Activated CD4-positive, alpha-beta memory T cell treated with anti-CD3 and anti-CD28 coated beads, Interleukin-2, amount 10 ng/mL, durations not matched to agents 7 days and 5 days (primary cell): ENCODE measurements at regions of chr11 and their contacts with region 1.

Region 1: DNA sequence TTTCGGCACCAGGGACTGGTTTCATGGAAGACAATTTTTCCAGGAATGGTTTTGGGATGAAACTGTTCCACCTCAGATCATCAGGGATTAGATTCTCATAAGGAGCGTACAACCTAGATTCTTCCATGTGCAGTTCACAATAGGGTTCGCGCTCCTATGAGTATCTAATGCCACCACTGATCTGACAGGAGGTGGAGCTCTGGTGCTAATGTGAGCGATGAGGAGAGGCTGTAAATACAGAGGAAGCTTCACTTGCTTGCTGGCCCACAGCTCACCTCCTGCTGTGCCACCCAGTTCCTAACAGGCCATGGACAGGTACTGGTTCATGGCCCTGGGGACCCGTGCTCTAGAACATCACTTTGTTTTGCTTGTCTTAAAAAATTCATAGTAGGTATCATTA is 41.8 kb upstream of the AMPD3 start:
- DNase-seq: peak; percentile 64
- H3K4me3 Mint-ChIP-seq: no peak overlapping the region
- H3K27ac Mint-ChIP-seq: no peak overlapping the region
- H3K4me1 Mint-ChIP-seq: peaks cover 49% of the 10 kb centered on the region
- H3K27me3 Mint-ChIP-seq: peaks cover 10% of the 10 kb centered on the region

Region 2: GRCh38 chr11:10394229-10395101 is 18.8 kb before region 1 on chr11:
- CTCF ChIA-PET with region 1: no interaction called
- POLR2A ChIA-PET with region 1: no interaction called
- DNase-seq: no peak
- H3K4me3 Mint-ChIP-seq: no peak overlapping the region
- H3K27ac Mint-ChIP-seq: no peak overlapping the region
- H3K4me1 Mint-ChIP-seq: no peaks in the 10 kb centered on the region
- H3K27me3 Mint-ChIP-seq: peaks cover 35% of the 10 kb centered on the region

Region 3: DNA sequence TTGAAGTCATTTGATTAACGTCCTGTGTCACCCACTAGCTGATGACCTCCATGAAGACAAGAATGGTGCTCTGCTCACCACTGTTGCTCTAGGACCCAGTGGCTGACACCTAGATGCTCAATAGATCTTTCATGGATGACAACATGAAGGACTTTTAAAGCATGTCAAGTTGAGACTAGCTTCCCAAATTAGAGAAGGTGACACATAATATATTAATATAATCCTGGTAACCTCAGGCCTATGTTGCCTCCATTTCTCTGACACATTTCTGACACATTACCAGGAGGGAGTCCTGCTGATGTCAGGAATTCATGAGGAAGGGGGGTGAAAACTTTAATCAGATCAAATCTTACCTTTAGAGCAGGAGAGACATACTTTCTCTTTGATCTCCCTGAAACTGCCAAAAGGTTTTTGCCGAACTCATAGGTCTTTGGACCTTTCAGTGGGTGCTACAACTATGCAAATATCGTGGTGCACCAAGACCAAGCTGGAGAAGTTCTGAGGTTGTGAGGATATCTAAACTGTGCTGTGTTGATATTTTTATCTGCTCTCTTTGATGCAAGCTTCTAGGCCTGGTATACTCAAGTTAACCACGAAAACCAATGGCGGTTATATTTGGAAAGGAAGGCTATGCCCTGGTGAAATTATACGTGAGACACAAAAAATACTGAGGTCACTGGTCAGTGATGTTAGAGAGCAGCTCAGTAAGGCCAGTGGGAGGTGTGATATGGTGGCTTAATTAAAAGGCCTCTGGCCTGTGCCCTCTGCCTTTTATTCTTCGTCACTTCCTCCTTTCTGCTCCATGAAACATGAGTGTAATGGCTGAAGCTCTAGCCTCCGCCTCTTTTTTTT is 28.6 kb after region 1 on chr11:
- CTCF ChIA-PET with region 1: interaction called, 14 read pairs
- POLR2A ChIA-PET with region 1: no interaction called
- DNase-seq: peak; percentile 40
- H3K4me3 Mint-ChIP-seq: no peak overlapping the region
- H3K27ac Mint-ChIP-seq: peak overlapping the region; percentile 5
- H3K4me1 Mint-ChIP-seq: peaks cover 29% of the 10 kb centered on the region
- H3K27me3 Mint-ChIP-seq: peaks cover 9% of the 10 kb centered on the region

Region 4: DNA sequence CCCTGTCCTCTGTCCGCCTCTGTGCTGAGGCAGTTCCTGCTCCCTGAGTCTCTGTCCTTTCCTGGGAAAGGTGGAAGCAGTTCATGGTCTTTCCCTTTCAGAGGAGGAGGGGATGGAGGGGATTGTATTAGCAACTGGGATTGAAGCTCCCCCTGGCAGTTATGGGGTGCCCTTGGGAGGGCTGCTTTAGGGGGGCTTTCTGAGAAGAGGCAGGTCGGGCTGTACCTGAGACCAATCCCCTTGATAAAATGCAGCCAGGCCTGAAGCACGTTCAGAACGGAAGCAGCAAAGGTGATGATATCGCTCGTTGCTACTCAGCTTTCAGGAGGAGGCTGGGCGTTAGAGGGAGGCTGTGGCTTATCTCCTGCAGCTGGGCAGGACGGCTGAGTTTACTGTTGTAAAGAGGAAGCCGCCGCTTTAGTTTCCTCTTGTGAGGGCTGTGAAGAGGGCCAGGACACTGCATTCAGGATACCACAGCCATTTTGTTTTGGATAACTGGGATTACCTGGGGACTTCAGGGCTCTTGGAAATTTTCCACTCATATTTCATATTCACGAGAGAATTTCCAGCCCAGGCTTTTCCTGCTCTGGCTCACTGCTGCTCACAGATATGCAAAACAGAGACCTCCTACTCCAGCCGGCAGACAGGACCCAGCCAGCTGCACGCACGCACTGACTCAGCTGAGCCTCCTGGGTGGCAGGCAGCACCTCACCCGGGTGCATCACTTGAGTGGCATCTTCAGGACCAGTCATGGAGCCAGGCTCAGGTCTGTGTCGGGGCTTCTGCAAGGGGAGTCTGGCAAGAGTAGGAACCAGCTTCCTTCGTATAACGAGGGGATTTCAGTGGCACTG is 42.6 kb after region 1 on chr11:
- CTCF ChIA-PET with region 1: interaction called, 36 read pairs
- POLR2A ChIA-PET with region 1: interaction called, 16 read pairs
- DNase-seq: peak; percentile 85
- H3K4me3 Mint-ChIP-seq: peak overlapping the region; percentile 84
- H3K27ac Mint-ChIP-seq: peak overlapping the region; percentile 90
- H3K4me1 Mint-ChIP-seq: peaks cover 78% of the 10 kb centered on the region
- H3K27me3 Mint-ChIP-seq: no peaks in the 10 kb centered on the region

Region 5: GRCh38 chr11:10653926-10654810 is 240.9 kb after region 1 on chr11:
- CTCF ChIA-PET with region 1: interaction called, 135 read pairs
- POLR2A ChIA-PET with region 1: interaction called, 4 read pairs
- DNase-seq: peak; percentile 49
- H3K4me3 Mint-ChIP-seq: no peak overlapping the region
- H3K27ac Mint-ChIP-seq: no peak overlapping the region
- H3K4me1 Mint-ChIP-seq: peaks cover 39% of the 10 kb centered on the region
- H3K27me3 Mint-ChIP-seq: no peaks in the 10 kb centered on the region

Region 6: DNA sequence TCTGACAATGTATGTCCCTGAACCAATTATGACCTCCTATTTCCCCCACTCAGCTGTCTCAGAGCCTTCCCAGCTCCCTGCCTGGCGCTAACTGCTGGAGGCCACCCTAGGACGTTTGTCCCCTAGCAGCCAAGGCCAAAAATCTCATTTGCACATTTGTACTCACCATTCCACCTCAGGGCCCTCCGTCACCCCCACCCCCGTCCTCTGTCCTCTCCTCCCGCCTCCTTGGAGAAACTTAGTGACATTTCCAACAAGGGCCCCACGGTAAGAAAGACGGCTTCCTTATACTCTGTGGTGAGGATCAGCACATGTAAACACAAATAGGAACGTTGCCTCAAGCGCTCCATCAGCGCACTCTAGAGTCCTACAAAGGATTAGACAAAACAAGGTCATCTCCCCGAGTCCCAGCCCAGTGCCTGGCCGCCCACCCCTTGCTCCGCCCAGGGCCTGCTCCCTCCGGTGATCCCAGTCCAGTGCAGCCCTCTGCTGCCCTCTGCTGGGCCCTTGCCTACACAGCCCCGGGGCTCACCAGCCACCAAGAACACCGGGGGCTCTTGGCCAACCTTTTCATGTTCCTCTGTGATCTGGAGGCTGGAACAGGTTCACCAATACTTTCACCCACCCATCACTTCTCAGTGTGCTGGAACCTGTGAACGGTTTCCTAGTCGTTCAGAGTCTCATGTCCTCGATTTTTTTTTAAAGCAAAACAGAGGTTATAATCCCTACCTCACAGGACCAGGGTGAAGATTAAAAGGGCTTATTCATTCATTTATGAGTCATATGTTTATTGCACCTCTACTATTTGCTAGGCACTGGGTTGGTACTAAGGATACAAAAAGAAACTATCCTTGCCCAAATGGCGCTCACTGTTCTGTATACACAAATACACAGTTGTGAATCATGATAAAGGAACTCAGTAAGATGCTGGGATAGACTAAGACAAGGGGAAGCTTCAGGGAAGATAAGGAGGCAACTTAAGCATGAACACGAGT is 322.5 kb after region 1 on chr11:
- CTCF ChIA-PET with region 1: interaction called, 24 read pairs
- POLR2A ChIA-PET with region 1: no interaction called
- DNase-seq: peak; percentile 88
- H3K4me3 Mint-ChIP-seq: peak overlapping the region; percentile 46
- H3K27ac Mint-ChIP-seq: no peak overlapping the region
- H3K4me1 Mint-ChIP-seq: peaks cover 10% of the 10 kb centered on the region
- H3K27me3 Mint-ChIP-seq: peaks cover 5% of the 10 kb centered on the region